ENCODE measurements at regions of chr1 and their contacts with region 1.

Region 1: GRCh38 chr1:19240673-19241538 is 10.4 kb downstream of the EMC1 start:
- DNase-seq: peak; percentile 81
- H3K4me3 Mint-ChIP-seq: no peak overlapping the region
- H3K27ac Mint-ChIP-seq: no peak overlapping the region
- H3K4me1 Mint-ChIP-seq: no peaks in the 10 kb centered on the region
- H3K27me3 Mint-ChIP-seq: no peaks in the 10 kb centered on the region

Region 2: DNA sequence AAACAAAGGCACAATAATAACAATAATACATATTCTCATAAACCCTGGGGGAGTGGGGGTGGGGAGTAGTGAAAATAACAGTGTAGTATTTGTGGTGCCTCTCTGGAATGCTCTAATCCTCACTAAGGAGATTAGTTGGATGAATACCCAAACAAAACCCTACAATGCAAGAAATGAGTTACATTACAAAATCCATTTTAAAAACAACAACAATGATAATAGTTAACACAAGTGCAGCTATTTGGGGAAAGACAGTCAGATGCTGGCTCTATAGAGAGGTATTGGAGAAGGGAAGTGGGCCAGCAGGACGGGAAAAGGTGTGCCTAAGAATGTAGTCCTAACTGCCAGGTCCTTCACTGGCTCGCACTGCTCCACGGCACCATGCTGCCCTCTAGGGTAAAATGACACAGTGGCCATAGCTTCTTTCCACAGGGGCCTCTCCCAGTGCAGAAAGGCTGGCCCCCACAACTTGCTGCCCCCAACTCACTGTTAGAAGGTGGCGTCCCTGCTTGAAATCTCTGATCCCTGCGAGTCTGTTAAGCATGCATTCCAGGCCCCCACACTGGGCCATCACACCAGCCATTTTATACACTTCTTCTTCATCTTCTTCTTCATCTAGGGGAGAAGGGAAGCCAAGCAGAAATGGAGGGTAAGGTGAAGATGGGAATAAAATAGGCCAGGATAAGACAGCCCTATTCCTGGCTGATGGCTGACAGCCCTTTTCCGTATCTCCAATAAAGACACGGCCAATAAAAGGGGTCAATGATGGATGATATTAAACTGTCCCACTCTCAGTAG is 144.7 kb before region 1 on chr1:
- CTCF ChIA-PET with region 1: no interaction called
- POLR2A ChIA-PET with region 1: no interaction called
- intact Hi-C with region 1: no loop called
- DNase-seq: peak; percentile 39
- H3K4me3 Mint-ChIP-seq: no peak overlapping the region
- H3K27ac Mint-ChIP-seq: no peak overlapping the region
- H3K4me1 Mint-ChIP-seq: no peaks in the 10 kb centered on the region
- H3K27me3 Mint-ChIP-seq: no peaks in the 10 kb centered on the region

Region 3: GRCh38 chr1:19165501-19165900 is 75.4 kb before region 1 on chr1:
- CTCF ChIA-PET with region 1: interaction called, 12 read pairs
- POLR2A ChIA-PET with region 1: no interaction called
- intact Hi-C with region 1: no loop called
- DNase-seq: no peak
- H3K4me3 Mint-ChIP-seq: no peak overlapping the region
- H3K27ac Mint-ChIP-seq: no peak overlapping the region
- H3K4me1 Mint-ChIP-seq: peaks cover 15% of the 10 kb centered on the region
- H3K27me3 Mint-ChIP-seq: no peaks in the 10 kb centered on the region

Region 4: GRCh38 chr1:19179597-19180264 is 61.2 kb before region 1 on chr1:
- CTCF ChIA-PET with region 1: interaction called, 41 read pairs
- POLR2A ChIA-PET with region 1: interaction called, 3 read pairs
- intact Hi-C with region 1: loop called (anchors 5 kb)
- DNase-seq: peak; percentile 34
- H3K4me3 Mint-ChIP-seq: no peak overlapping the region
- H3K27ac Mint-ChIP-seq: peak overlapping the region; percentile 26
- H3K4me1 Mint-ChIP-seq: peaks cover 16% of the 10 kb centered on the region
- H3K27me3 Mint-ChIP-seq: no peaks in the 10 kb centered on the region

Region 5: GRCh38 chr1:19268445-19268844 is 27.5 kb after region 1 on chr1:
- CTCF ChIA-PET with region 1: no interaction called
- POLR2A ChIA-PET with region 1: no interaction called
- intact Hi-C with region 1: no loop called
- DNase-seq: no peak
- H3K4me3 Mint-ChIP-seq: no peak overlapping the region
- H3K27ac Mint-ChIP-seq: no peak overlapping the region
- H3K4me1 Mint-ChIP-seq: peaks cover 2% of the 10 kb centered on the region
- H3K27me3 Mint-ChIP-seq: peaks cover 8% of the 10 kb centered on the region

Region 6: GRCh38 chr1:19338323-19338762 is 97.4 kb after region 1 on chr1:
- CTCF ChIA-PET with region 1: no interaction called
- POLR2A ChIA-PET with region 1: no interaction called
- intact Hi-C with region 1: no loop called
- DNase-seq: no peak
- H3K4me3 Mint-ChIP-seq: no peak overlapping the region
- H3K27ac Mint-ChIP-seq: no peak overlapping the region
- H3K4me1 Mint-ChIP-seq: peaks cover 33% of the 10 kb centered on the region
- H3K27me3 Mint-ChIP-seq: no peaks in the 10 kb centered on the region

Measured in activated CD4-positive, alpha-beta memory T cell treated with anti-CD3 and anti-CD28 coated beads for 36 hours (primary cell).